Heart right ventricle (tissue), 16 donors: ENCODE measurements at regions of chr7 and their contacts with region 1.

Region 1: GRCh38 chr7:84669177-84669732 is 474.7 kb upstream of the SEMA3A start:
- DNase-seq: peak in 1 of 2 donors; percentile 10
- ATAC-seq: peak in 4 of 8 donors; percentile 33 to 80 (median 66)
- H3K4me3 ChIP-seq: no peak overlapping the region
- H3K27ac ChIP-seq: peak overlapping the region in 1 of 10 donors; percentile 39
- H3K4me1 ChIP-seq: peaks cover 0 to 5% (median 0%) of the 10 kb centered on the region in 9 donors
- H3K27me3 ChIP-seq: no peaks in the 10 kb centered on the region
- CTCF ChIP-seq: no peak

Region 2: DNA sequence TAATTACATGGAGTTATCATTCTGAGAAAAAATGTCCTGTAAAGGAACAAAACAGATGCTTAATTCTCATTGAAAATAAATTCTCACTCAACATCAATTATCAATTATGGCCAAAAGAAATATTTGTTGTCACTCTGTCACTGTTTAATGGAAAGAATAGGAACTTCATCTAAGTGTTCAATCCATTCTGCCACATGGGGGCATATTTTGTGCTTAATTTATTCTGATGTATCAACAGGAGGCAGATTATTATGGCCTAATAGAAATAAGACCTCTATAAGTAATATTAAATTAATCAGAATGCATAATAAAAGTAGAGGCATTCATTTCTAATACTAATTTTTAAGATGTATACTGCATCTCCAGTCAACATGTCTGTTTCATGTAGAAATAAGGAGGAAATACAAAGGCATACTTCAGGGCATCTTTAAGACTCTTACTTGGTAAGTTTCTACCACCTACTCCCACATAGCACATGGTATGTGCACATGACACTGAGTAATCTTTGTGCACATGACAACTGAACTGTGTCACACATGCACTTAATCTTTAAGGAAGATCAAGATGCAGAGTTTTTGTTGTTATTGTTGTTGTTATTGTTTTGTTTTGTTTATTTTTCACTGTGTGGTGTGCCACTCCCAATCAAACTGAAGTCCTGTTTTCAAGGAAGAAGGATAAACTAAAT is 54.3 kb before region 1 on chr7:
- intact Hi-C with region 1: no loop called
- DNase-seq: no peak
- ATAC-seq: no peak
- H3K4me3 ChIP-seq: no peak overlapping the region
- H3K27ac ChIP-seq: no peak overlapping the region
- H3K4me1 ChIP-seq: no peaks in the 10 kb centered on the region
- H3K27me3 ChIP-seq: no peaks in the 10 kb centered on the region
- CTCF ChIP-seq: peak in 2 of 9 donors; percentile 18 to 30

Region 3: DNA sequence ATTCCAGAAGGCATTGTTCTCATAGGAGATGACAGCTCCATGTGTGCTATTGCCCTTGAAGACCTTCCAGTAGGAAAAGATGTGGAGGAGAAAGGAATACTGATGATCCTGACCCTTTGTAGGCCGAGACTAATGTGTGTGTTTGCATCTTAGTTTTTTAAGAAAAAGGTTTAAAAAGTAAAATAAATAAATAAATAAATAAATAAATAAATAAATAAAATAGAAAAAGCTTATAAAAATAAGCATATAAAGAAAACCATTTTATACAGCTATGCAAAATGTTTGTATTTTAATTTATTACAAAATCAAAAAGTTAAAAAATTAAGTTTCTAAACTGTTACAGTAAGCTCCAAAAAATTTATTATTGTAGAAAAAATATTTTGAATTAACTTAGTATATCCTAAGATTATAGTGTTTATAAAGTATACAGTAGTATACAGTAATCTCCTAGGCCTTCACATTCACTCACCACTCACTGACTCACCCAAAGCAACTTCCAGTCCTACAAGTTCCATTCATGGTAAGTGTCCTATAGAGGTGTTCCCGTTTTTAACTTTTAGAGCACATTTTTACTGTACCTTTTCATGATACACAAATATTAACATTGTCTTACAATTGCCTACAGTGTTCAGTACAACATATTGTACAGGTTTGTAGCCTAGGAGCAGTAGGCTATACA is 39.5 kb before region 1 on chr7:
- intact Hi-C with region 1: loop called in 1 of 10 experiments (anchors 5 kb)
- DNase-seq: no peak
- ATAC-seq: no peak
- H3K4me3 ChIP-seq: no peak overlapping the region
- H3K27ac ChIP-seq: no peak overlapping the region
- H3K4me1 ChIP-seq: no peaks in the 10 kb centered on the region
- H3K27me3 ChIP-seq: no peaks in the 10 kb centered on the region
- CTCF ChIP-seq: no peak